Left colon (tissue), 2 donors: ENCODE measurements at regions of chr6 and their contacts with region 1.

Region 1: DNA sequence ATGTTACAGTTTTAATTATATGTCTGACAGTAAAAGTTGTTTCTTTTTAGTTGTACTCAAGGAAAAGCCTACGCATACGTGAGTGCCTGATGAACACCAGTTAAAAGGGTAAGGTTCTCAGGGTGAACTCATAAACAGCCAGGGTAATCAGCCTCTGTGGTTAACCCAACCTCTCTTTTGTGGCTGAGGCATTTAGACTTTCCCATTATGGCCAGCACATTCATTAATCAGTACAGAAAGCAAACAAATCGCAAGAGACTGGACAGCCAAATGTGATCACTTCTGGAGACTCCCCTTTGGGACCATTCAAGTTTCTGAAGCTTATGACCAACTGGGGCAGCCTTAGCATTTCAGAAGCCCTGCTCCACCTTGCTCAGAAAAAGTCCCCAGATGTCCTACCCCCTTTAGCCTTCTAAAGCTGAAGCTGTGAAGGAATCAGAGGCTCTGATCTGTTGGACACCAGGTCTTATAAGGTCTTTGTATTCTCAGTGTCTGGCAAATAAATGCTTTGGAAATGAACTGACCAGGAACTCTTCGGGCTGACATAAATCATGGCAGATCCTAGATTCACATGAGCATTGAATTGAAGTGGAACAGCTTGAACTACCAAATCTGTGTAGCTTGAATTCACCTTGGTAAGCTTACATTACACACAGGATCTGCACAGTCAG is 18.8 kb downstream of the IL20RA start:
- DNase-seq: no peak
- ATAC-seq: peak; percentile 84

Region 2: GRCh38 chr6:136959471-136959891 is 66.4 kb before region 1 on chr6:
- intact Hi-C with region 1: loop called in 1 of 2 experiments (anchors 2 kb)
- DNase-seq: peak; percentile 75 to 85
- ATAC-seq: peak; percentile 77